ENCODE measurements at regions of chr6 and their contacts with region 1.

Region 1: DNA sequence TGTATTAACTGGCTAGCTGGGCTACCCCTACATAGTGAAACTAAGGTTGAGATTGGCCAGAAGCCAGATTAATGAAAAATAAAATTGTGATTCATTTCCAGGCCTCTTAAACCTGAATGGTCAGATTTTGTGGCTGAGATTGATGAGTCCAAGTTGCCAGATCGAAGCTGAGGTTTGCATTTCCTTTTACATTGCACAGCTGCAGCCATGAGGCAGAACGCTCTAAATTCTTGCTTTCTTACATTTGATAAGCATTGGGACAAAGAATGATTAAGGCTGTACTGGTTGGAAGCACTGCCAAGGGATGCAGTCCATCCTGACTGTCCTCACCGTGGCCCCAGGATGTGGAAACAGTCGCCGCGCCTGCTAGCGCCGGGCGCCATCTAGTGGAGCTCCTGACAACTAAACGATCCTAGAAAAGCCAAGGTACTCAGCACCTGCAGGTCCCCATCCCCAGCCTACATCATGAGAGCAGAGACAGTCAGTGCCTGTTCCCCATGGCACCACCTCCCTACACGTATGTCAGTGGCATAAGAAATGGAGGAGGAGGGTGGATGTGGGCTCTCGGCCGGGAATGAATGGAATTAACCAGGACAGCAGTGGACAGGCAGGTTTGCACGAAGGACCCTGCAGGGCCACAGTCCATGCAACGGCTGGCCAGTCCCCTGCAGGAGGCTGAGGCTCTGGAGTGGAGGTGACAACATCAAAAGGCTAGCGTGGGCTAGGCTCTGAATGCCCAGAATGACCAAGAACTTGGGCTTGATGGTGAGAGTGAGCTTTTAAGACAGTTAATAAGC is 19.0 kb downstream of the PXDC1 start:
- DNase-seq: peak; percentile 76
- H3K4me3 Mint-ChIP-seq: no peak overlapping the region
- H3K27ac Mint-ChIP-seq: no peak overlapping the region
- H3K4me1 Mint-ChIP-seq: no peaks in the 10 kb centered on the region
- H3K27me3 Mint-ChIP-seq: peaks cover 31% of the 10 kb centered on the region

Region 2: GRCh38 chr6:3281631-3282475 is 450.7 kb before region 1 on chr6:
- CTCF ChIA-PET with region 1: interaction called, 53 read pairs
- DNase-seq: no peak
- H3K4me3 Mint-ChIP-seq: no peak overlapping the region
- H3K27ac Mint-ChIP-seq: no peak overlapping the region
- H3K4me1 Mint-ChIP-seq: peaks cover 2% of the 10 kb centered on the region
- H3K27me3 Mint-ChIP-seq: no peaks in the 10 kb centered on the region

Measured in activated naive CD4-positive, alpha-beta T cell treated with anti-CD3 and anti-CD28 coated beads, Interleukin-2, amount 10 ng/mL, durations not matched to agents 7 days and 5 days (primary cell).